SK-N-SH (cell line): ENCODE measurements at regions of chr1 and their contacts with region 1.

Region 1: GRCh38 chr1:111769517-111770146 is 13.9 kb downstream of the DDX20 start:
- DNase-seq: peak; percentile 66
- H3K4me3 ChIP-seq: no peak overlapping the region
- H3K27ac ChIP-seq: no peak overlapping the region
- H3K4me1 ChIP-seq: no peaks in the 10 kb centered on the region
- H3K27me3 ChIP-seq: no peaks in the 10 kb centered on the region
- CTCF ChIP-seq: peak; percentile 87
- EP300 ChIP-seq: no peak
- RAD21 ChIP-seq: peak; percentile 87

Region 2: DNA sequence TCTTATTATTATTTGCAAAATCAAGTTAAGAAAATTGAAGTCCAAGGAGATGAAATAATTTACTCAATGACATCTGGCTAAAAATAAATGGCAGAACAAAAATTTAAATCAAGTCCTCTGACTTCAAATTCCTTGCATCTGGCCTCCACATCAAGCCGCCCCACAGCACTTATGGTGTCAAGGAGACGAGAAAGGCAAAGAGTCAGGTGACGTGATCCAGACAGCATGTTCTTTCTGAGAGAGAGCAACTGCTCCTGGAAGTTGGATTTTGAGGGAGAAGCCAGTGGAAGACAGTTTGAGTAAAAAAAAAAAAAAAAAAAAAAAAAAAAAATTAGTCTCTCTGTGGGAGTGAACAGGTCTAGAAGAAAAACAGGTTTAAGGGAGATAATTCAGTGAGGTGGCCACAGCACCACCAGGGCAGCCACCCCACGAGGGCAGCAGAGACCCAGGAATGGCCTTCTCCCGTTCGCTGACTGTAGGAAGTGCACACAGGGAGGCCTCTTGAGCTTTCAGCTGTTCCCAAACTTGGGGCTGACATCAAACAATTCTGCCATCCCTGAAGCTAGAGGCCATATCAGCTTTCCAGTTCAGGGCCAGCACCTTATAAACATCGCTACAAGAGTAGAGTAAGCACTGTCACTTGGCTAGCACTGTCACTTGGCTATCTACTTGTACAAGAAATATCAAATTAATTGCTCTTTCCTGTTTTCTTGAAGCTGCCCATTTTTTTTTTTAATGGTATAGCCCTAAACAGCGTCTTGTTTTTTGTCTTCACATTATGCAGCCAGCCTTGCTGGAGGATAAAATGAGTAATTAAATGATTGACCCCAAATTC is 288.0 kb before region 1 on chr1:
- CTCF ChIA-PET with region 1: interaction called, 10 read pairs
- POLR2A ChIA-PET with region 1: no interaction called
- DNase-seq: peak; percentile 62
- H3K4me3 ChIP-seq: no peak overlapping the region
- H3K27ac ChIP-seq: no peak overlapping the region
- H3K4me1 ChIP-seq: peaks cover 0 to 3% of the 10 kb centered on the region in 2 experiments; a peak in 1 of 4 replicates
- H3K27me3 ChIP-seq: no peaks in the 10 kb centered on the region
- CTCF ChIP-seq: peak; percentile 62
- EP300 ChIP-seq: no peak
- RAD21 ChIP-seq: peak; percentile 82

Region 3: DNA sequence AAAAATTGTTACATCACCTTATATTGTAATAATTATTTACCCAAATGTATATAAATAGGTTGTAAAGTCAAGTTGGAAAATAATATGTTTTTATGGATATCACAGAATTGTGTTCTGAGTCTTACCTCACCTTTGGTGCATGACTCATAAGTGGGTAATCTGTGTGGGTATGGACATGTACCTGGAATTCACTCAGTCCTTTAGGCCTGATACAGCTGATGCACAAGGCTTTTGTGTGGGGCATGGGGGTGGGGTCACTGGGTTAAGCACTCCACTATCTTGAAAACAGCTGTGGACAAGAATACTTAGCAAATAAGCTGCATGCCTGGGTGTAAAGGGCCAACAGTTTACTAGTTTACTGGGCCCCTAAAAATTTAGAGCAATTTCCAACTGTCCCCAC is 64.9 kb before region 1 on chr1:
- CTCF ChIA-PET with region 1: interaction called, 16 read pairs
- POLR2A ChIA-PET with region 1: no interaction called
- DNase-seq: no peak
- H3K4me3 ChIP-seq: no peak overlapping the region
- H3K27ac ChIP-seq: no peak overlapping the region
- H3K4me1 ChIP-seq: no peaks in the 10 kb centered on the region; a peak in 2 of 4 replicates
- H3K27me3 ChIP-seq: no peaks in the 10 kb centered on the region
- CTCF ChIP-seq: no peak
- EP300 ChIP-seq: no peak
- RAD21 ChIP-seq: no peak

Region 4: GRCh38 chr1:111716333-111716732 is 53.3 kb before region 1 on chr1:
- CTCF ChIA-PET with region 1: interaction called, 52 read pairs
- POLR2A ChIA-PET with region 1: no interaction called
- DNase-seq: no peak
- H3K4me3 ChIP-seq: no peak overlapping the region
- H3K27ac ChIP-seq: no peak overlapping the region
- H3K4me1 ChIP-seq: no peaks in the 10 kb centered on the region
- H3K27me3 ChIP-seq: no peaks in the 10 kb centered on the region
- CTCF ChIP-seq: no peak
- EP300 ChIP-seq: no peak
- RAD21 ChIP-seq: no peak

Region 5: DNA sequence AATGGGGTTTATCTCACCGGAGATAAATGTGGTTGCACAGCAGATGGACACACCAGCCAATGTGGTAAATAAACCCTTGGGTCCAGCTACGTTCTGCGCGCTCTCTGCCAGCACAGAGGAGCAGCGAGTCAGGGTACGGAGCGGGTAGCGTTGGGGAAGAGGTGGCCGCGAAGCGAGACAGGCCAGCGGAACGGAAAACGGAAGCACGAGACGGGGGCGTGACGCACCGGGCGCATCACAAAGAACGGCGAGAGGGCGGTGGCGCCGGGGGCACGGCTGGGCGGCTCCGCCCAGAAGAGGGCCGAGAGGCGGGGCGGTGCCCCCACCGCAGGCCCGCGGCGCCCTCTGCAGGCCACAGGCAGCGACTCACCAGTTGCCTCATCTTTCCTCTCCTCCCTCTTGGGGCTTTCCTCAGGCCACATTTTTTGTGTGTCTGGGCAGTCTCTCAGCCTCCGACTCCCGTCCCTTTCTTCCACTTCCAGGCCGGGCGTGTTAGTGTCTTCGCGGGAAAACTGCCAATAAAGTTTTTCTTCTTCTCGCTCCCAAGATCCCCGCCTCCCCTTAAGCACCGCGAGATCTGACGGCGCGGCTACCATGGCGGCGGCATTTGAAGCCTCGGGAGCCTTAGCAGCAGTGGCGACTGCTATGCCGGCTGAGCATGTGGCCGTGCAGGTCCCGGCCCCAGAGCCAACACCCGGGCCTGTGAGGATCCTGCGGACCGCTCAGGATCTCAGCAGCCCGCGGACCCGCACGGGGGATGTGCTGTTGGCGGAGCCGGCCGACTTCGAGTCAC is 14.1 kb before region 1 on chr1 and contains the start of gene DDX20:
- CTCF ChIA-PET with region 1: interaction called, 48 read pairs
- POLR2A ChIA-PET with region 1: interaction called, 3 read pairs
- DNase-seq: peak; percentile 97
- H3K4me3 ChIP-seq: peak within 1 kb of the TSS; percentile 96 to 99
- H3K27ac ChIP-seq: peak within 1 kb of the TSS; percentile 96 to 99
- H3K4me1 ChIP-seq: peaks cover 9 to 11% of the 10 kb centered on the region in 2 experiments; a peak in 3 of 4 replicates
- H3K27me3 ChIP-seq: no peaks in the 10 kb centered on the region
- CTCF ChIP-seq: peak; percentile 98
- EP300 ChIP-seq: peak in 1 of 2 experiments; percentile 39; a peak in 1 of 4 replicates
- RAD21 ChIP-seq: peak; percentile 72
- polyA plus RNA-seq, gene DDX20: 3.8 and 5.3 TPM in 2 replicates

Region 6: GRCh38 chr1:111801071-111801841 is 31.6 kb after region 1 on chr1:
- CTCF ChIA-PET with region 1: no interaction called
- POLR2A ChIA-PET with region 1: no interaction called
- DNase-seq: peak; percentile 29
- H3K4me3 ChIP-seq: no peak overlapping the region
- H3K27ac ChIP-seq: no peak overlapping the region
- H3K4me1 ChIP-seq: no peaks in the 10 kb centered on the region
- H3K27me3 ChIP-seq: peaks cover 18% of the 10 kb centered on the region; the same call in 1 of the 2 replicates
- CTCF ChIP-seq: no peak
- EP300 ChIP-seq: no peak
- RAD21 ChIP-seq: 0 out of 2 replicates have a peak, but pooled peaks have one; percentile 6

Region 7: GRCh38 chr1:111920221-111921024 is 150.8 kb after region 1 on chr1:
- CTCF ChIA-PET with region 1: no interaction called
- POLR2A ChIA-PET with region 1: no interaction called
- DNase-seq: no peak
- H3K4me3 ChIP-seq: no peak overlapping the region
- H3K27ac ChIP-seq: no peak overlapping the region
- H3K4me1 ChIP-seq: no peaks in the 10 kb centered on the region; a peak in 1 of 4 replicates
- H3K27me3 ChIP-seq: peaks cover 8% of the 10 kb centered on the region
- CTCF ChIP-seq: no peak
- EP300 ChIP-seq: no peak
- RAD21 ChIP-seq: no peak